ENCODE measurements at regions of chr3 and their contacts with region 1.

Region 1: DNA sequence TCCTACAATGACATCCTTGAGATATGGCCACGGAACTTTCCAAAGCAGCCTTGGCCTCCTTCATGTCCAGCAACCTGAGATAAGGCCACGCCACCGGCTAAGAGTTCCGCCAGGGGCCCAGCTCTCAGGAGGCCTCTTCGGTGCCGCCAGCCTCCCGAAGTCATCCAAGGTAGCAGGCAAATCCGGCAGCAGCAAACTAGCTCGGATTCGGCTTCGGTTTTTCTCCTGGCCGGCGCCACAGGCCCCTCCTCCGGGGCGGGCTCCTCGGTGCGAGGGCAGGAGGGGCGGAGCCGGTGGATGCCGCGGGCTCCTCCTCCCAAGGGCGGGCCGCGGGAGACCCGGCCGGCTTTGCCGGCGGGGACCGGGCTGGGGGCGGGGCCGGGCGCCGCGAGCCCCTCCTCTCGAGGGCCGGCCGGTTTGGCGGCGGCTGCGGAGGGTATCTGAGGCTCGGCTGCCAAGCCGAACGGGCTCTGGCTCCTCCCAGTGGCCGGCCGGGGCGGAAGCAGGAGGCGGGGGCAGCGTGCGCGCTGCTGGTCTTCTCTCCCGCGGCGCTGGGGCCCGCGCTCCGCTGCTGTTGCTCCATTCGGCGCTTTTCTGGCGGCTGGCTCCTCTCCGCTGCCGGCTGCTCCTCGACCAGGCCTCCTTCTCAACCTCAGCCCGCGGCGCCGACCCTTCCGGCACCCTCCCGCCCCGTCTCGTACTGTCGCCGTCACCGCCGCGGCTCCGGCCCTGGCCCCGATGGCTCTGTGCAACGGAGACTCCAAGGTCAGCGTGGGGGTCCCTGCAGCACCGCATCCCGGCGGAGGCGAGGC is at the start of gene GMPS:
- DNase-seq: peak; percentile 90 to 98
- H3K4me3 ChIP-seq: peak within 1 kb of the TSS; percentile 99 to 100
- H3K27ac ChIP-seq: peak within 1 kb of the TSS; percentile 97 to 99
- H3K4me1 ChIP-seq: peaks cover 0 to 45% (median 12%) of the 10 kb centered on the region in 4 donors
- H3K27me3 ChIP-seq: no peaks in the 10 kb centered on the region
- CTCF ChIP-seq: peak; percentile 50 to 52

Region 2: GRCh38 chr3:155778462-155778861 is 91.9 kb before region 1 on chr3:
- intact Hi-C with region 1: no loop called
- DNase-seq: no peak
- H3K4me3 ChIP-seq: no peak overlapping the region
- H3K27ac ChIP-seq: no peak overlapping the region
- H3K4me1 ChIP-seq: no peaks in the 10 kb centered on the region
- H3K27me3 ChIP-seq: no peaks in the 10 kb centered on the region
- CTCF ChIP-seq: no peak

Region 3: DNA sequence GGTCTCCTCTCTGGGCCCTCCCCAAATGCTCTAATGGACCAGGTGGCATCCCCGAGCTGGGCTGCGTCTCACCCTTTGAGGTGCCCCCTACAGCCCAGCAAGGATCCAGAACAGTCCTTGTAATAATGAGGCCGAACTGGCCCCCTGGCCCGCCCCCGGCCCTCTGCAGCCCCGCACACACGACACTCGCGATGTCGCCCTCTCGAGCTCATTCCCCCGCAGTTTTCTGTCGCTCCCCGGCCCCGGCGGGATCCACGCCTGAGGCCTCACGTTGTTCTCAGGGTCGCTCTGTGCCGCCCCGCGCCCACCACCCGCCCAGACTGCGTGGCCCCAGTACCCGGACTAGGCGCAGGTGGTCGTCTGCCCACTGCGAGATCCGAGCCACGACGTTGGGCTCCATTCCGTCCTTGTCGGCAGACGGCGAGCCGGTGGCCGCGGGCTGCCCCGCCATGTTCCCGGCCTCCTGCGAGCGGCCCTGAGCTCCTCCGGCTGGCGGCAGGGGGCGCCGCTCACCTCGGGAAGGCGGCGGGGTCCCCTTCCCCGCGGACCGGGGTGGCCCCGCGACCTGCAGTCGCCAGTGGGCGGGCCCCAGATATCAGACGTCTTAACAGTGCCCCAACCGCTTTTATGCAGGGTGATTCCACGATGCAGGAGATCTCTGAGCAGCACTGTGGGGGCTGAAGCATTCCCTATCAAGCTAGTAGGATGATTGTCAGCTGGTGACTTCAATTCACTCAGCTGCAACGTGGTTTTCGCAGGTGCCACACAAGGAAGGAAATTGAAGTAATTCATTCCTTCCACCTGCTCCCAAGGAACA is 64.3 kb before region 1 on chr3 and contains the start of gene C3orf33:
- intact Hi-C with region 1: loop called (anchors 5 kb)
- DNase-seq: peak; percentile 50 to 80
- H3K4me3 ChIP-seq: peak within 1 kb of the TSS; percentile 85 to 93
- H3K27ac ChIP-seq: peak within 1 kb of the TSS; percentile 93 to 95
- H3K4me1 ChIP-seq: peaks cover 0 to 11% (median 3%) of the 10 kb centered on the region in 4 donors
- H3K27me3 ChIP-seq: no peaks in the 10 kb centered on the region
- CTCF ChIP-seq: peak; percentile 74 to 78

Measured in tibial artery (tissue), 4 donors.